Astrocyte of the cerebellum (primary cell): ENCODE measurements at regions of chr4 and their contacts with region 1.

Region 1: DNA sequence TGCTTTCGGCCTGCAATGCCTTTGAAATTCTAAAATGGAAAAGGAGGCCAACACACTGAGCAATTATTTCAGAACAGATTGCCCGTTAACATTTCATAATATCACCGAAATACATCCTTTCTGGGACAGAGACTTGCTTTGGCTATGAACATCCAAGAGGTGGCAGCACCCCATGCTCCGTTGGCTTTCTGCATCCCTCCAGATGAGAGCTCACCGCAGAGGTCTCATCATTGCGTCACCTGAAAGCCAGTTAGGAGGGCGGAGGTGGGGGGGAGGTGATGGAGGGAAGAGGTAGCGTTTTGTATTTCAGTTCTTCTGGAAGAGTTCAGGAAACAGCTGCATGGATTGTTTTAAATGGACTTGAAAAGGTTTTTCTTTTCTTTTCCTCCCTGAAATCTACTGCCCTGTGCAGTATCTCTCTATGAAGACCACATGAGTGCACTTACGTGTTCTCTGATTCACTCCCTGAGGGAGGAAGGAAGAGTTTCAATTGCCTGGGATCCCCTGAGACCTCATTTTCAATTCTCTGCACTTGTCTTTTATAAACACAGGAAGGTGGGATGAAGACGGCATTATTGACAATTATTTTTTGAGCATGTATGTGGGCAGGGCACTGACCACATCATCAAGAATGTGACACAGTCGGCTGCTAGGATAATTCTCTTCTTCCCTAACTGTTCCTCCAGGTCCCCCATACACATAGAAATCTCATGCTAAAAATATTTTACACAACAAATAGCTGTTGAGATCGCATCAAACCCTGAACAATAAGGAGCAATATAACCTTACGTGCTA is 166.9 kb upstream of the PGRMC2 start:
- DNase-seq: peak; percentile 88
- H3K4me3 ChIP-seq: no peak overlapping the region
- CTCF ChIP-seq: peak; percentile 89

Region 2: DNA sequence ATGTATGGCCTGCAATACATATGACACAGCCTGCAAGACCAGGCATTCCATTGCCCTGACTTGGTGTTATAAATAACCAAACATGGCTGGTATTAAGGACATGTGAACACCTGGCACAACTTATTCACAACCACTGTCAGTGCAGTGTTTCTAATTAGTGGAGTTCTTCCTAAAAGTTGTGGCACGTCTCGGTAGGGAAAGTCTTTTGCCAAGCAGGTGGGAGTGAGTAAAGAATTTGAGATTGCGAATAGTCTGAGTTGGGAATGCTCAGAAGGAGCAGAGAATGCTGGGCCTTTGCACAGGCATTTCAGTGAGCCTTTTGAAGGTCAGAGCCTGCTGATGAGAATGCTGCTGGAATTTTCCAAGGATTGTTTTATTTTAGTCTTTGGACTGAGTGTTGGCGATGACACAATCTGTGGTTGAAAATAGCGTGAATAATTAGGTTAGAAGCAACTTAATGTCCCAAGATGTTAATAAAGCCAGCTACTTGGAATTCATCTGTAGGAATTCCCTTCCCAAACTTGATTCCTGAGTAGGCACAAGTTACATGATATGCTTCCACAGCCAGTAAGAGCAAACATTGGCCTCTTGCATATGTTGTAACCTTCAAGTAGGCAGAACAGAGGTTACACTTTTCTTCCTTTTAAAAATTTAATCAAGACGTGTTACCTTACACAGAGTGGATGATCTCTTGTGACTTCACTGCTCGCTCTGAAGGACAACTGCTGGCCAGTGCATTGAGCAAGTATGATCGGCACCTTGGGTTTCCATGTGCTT is 83.3 kb before region 1 on chr4:
- in situ Hi-C with region 1: no loop called
- DNase-seq: no peak
- H3K4me3 ChIP-seq: no peak overlapping the region
- CTCF ChIP-seq: no peak

Region 3: DNA sequence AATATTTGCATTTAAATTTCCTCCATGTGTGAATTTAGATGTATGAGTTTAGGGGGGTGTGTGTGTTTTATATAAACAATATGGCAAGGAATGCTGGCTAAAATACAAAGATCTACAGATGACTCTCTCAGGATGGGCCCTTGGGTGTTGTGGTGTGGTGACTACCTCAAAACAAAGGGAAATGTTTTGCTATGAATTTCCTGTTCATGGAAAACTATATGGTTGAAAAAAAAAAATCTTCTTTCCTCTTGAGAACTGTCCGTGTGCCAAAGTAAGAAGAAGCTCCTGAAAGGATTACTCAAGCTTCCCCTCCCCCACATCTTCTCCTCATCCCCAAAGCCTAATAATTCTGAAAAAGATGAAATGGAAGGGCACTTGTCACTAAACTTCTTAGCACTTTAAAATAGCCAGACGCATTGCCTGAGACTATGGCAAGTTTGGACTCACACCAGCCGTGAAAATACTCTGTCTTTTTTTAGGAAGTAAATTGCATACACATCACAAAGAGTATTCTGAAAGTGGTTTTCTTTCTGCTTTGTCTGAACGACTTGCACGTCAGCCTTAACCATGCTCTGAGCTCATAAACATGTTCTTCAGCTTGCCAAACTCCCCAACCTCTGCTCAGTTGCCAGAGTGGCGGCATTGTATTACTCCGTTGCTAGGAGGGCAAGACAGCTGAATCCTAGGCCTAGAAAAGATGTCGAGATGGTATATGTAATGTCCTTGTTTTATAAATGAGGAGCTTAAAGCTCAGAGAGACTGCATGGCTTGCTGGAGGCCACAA is 104.6 kb after region 1 on chr4:
- in situ Hi-C with region 1: loop called (anchors 5 kb)
- DNase-seq: peak; percentile 77
- H3K4me3 ChIP-seq: no peak overlapping the region
- CTCF ChIP-seq: no peak

Region 4: DNA sequence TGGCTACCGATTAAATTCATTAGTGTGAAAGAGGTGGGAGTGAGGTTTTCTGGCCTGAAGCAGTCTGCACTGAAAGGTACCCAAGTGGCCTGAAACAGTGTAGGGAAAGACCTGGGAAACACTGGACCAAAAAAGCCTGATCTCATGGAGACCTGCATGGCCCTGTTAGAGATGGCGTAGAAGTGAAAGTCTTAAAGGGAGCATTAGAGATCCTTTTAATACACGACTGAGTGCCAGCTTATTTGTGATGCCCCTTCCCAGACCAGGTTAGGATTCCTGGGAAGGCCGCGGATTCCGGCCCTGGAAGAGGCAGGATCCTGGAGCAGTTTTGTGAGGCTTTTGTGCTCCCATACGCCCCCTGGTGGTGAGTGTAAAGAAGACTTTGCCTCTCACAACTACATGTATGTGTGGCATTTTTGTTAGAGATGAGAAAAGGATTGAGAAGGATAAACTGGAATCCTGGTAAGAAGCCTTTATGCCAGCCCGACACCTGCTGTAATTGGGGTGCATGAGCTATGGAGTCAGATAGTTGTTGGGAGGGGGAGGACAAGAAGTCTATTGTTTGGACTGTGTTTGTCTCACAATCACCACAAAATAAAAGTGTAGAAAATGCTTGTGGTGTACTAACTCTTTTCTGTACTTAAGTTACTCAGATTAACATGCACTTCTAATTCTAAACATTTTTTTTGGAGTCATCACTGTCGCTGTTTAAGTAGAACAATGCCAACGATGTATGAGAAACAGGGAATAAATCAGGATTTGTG is 409.0 kb after region 1 on chr4:
- in situ Hi-C with region 1: loop called (anchors 25 kb)
- DNase-seq: peak; percentile 60
- H3K4me3 ChIP-seq: no peak overlapping the region
- CTCF ChIP-seq: peak; percentile 82